Heart left ventricle (tissue), 16 donors: ENCODE measurements at regions of chr10 and their contacts with region 1.

Region 1: GRCh38 chr10:4656576-4657182 is 169.3 kb upstream of the AKR1E2 start:
- DNase-seq: peak; percentile 47 to 66 (median 59)
- ATAC-seq: peak in 3 of 4 donors; percentile 70 to 76 (median 72)
- H3K4me3 ChIP-seq: no peak overlapping the region
- H3K27ac ChIP-seq: peak overlapping the region in 1 of 12 donors; percentile 12
- H3K4me1 ChIP-seq: peaks cover 0 to 22% (median 8%) of the 10 kb centered on the region in 12 donors
- H3K27me3 ChIP-seq: no peaks in the 10 kb centered on the region
- CTCF ChIP-seq: peak; percentile 85 to 97 (median 91)
- POLR2A ChIP-seq: no peak

Region 2: DNA sequence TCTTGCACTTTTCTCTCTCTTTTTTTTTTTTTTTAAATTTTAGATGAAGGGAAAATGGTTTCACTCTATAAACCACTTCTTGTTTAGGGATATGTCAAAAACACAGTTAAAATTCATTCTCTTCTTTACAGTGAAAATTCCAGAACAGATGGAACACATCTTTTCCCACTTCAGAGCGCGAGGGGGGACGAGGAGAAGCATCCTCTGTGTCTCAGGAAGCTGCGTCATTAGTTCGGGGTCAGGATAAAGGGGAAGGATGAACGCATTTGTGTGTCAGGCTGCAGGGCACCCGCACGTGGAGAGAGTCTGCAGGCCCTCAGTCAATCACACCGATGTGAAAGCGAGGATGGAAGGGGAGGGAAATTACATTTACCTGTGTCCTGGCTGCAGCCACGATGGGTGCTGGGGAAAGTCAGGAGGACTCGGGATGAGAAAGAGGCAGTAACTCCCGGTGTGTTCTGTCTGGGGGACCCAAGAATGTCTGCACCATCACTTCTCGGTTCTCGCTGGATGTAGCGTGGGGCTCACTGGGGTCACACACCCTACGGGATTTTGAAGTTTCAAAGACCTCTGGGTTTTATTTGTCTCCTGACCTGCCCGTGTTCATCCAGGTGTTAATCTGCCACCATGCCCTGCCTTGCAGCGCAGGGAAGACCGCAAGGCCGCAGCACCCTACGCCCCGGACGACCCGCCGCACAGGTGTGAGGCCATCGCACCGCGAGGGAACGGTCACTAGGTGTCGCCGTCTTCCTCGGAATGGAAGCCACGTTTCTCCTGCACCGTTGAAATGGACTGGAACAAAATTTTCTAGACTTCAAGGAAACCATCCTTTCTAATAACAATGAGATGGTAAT is 1417.4 kb before region 1 on chr10:
- intact Hi-C with region 1: loop called (anchors 5 to 10 kb)
- DNase-seq: peak; percentile 70 to 85 (median 75)
- ATAC-seq: peak; percentile 59 to 88 (median 82)
- H3K4me3 ChIP-seq: peak overlapping the region in 8 of 12 donors; percentile 6 to 36 (median 24)
- H3K27ac ChIP-seq: peak overlapping the region in 8 of 12 donors; percentile 39 to 75 (median 54)
- H3K4me1 ChIP-seq: peaks cover 0 to 10% (median 3%) of the 10 kb centered on the region in 12 donors
- H3K27me3 ChIP-seq: no peaks in the 10 kb centered on the region
- CTCF ChIP-seq: peak; percentile 84 to 98 (median 94)
- POLR2A ChIP-seq: no peak

Region 3: GRCh38 chr10:3911713-3912442 is 744.8 kb before region 1 on chr10:
- intact Hi-C with region 1: loop called in 3 of 10 experiments (anchors 10 kb)
- DNase-seq: no peak
- ATAC-seq: peak; percentile 87 to 90 (median 89)
- H3K4me3 ChIP-seq: peak overlapping the region in 11 of 12 donors; percentile 6 to 56 (median 48)
- H3K27ac ChIP-seq: peak overlapping the region; percentile 53 to 91 (median 82)
- H3K4me1 ChIP-seq: peaks cover 0 to 36% (median 0%) of the 10 kb centered on the region in 12 donors
- H3K27me3 ChIP-seq: no peaks in the 10 kb centered on the region
- CTCF ChIP-seq: no peak
- POLR2A ChIP-seq: peak in 1 of 2 donors; percentile 30

Region 4: GRCh38 chr10:4241724-4242345 is 414.8 kb before region 1 on chr10:
- intact Hi-C with region 1: loop called in 8 of 10 experiments (anchors 5 to 10 kb)
- DNase-seq: peak in 4 of 5 donors; percentile 72 to 78 (median 76)
- ATAC-seq: peak; percentile 87 to 91 (median 88)
- H3K4me3 ChIP-seq: peak overlapping the region in 11 of 12 donors; percentile 26 to 57 (median 45)
- H3K27ac ChIP-seq: peak overlapping the region; percentile 63 to 96 (median 89)
- H3K4me1 ChIP-seq: peaks cover 0 to 50% (median 41%) of the 10 kb centered on the region in 12 donors
- H3K27me3 ChIP-seq: no peaks in the 10 kb centered on the region
- CTCF ChIP-seq: no peak
- POLR2A ChIP-seq: no peak

Region 5: GRCh38 chr10:4353964-4354363 is 302.7 kb before region 1 on chr10:
- intact Hi-C with region 1: loop called in 3 of 10 experiments (anchors 10 kb)
- DNase-seq: no peak
- ATAC-seq: no peak
- H3K4me3 ChIP-seq: no peak overlapping the region
- H3K27ac ChIP-seq: peak overlapping the region in 4 of 12 donors; percentile 16 to 50 (median 33)
- H3K4me1 ChIP-seq: peaks cover 0 to 24% (median 19%) of the 10 kb centered on the region in 12 donors
- H3K27me3 ChIP-seq: no peaks in the 10 kb centered on the region
- CTCF ChIP-seq: no peak
- POLR2A ChIP-seq: no peak

Region 6: DNA sequence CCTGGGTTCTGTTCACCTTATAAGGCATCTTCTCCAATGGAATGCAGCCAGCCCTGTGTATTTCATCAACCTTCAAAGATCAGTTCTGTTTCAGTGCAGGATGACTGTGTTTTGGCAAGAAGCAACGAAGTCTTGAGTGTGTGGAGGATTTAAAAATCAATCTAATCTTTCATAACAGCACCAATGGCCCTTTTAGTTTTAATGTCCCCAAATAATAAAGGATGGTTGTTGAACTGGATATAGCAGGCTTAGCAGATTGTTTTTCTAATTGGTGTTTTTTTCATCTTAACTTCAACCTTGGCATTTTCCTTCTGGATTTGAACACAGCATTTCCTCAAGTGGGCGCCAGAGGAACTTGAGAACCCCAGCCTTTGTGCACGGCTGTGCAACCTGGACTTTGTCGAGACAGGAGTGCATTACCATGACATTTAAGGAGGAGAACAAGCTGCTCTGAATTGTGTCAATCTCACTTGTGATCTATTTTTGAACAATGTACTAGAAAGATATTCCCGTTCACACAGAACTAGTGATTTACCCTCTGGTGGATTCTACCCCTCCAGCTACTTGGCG is 143.9 kb before region 1 on chr10:
- intact Hi-C with region 1: loop called in 7 of 10 experiments (anchors 1 to 10 kb)
- DNase-seq: peak; percentile 51 to 79 (median 69)
- ATAC-seq: peak; percentile 79 to 91 (median 88)
- H3K4me3 ChIP-seq: no peak overlapping the region
- H3K27ac ChIP-seq: peak overlapping the region; percentile 10 to 85 (median 70)
- H3K4me1 ChIP-seq: peaks cover 5 to 48% (median 30%) of the 10 kb centered on the region in 12 donors
- H3K27me3 ChIP-seq: no peaks in the 10 kb centered on the region
- CTCF ChIP-seq: peak; percentile 36 to 68 (median 54)
- POLR2A ChIP-seq: no peak